ENCODE measurements at regions of chr2 and their contacts with region 1.

Region 1: DNA sequence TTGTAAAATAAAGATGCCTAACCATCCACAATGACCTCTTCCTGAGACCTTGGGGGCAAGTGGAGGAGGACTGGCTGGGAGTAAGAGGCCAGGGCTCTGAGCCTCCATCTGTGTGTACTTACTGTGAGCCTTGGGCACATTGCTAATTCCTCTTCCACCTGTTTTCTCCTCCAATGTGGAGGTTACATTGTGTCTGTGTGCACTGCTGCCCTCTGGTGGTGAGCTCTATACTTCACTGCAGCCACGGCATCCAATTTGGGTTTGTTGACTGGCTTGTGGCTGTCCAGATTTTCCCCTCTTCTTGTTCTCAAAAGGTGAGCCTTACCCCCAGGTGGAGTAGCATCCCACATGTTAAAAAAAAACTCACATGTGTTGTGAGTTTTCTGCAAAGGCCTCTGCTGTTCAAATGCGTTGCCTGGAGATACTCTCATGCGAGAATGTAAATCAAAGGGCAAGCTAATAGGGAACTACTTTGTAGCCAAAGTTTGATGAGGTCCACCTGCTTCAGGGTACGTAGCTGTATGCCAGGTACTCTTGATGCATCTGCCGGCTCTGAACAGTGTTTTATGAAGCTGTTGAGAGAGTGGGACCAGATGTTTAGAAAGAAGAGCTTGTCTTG is 80.8 kb downstream of the APOB start:
- DNase-seq: peak; percentile 41 to 94 (median 76)

Region 2: DNA sequence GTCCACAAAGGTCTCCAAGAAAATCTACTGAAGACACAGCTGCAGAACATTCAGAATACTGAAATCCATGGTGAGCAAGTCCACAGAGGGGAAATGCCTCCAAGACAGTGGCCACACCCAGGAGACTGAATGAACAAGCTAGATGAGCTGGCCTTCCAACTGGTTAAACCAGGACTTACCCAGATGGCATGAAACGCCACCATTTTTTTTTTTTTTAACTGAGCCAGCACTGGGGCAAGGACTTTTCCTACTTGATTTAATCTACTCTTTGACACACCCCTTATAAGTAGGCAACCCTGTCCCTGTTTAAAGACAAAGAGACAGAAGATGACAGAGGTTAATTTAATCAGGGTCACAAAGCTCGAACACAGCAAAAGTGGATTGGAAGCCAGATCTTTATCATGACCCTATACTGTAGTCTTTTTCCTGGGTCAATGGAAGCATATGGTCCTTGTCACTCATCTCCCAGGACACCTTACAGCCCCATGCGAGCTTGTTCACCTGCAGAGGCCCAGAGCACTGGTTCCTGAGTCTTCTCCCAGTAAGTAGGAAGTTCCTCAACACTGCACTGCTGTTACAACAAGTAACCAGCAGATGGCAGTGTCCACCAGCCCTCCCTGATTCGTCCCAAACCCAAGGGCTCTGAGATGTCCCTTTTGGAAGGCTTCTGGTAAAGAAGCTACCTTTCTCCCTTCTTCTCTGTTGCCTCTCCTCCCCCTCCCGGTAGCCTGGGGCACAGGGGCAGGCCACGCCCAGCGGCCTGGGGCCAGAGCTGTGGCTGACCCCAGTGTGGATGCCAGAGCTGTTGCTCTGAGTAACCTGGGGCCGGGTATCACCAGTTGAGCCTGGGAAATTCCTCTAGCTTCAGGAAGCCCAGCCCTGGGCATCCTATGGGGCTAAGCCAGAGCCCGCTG is 301.7 kb before region 1 on chr2:
- intact Hi-C with region 1: loop called (anchors 1 kb)
- DNase-seq: peak in 9 of 10 donors; percentile 56 to 95 (median 73)

Region 3: GRCh38 chr2:20682167-20682920 is 280.7 kb before region 1 on chr2:
- intact Hi-C with region 1: loop called (anchors 5 kb)
- DNase-seq: no peak

Region 4: GRCh38 chr2:20755132-20755800 is 207.8 kb before region 1 on chr2:
- intact Hi-C with region 1: no loop called
- DNase-seq: no peak

Region 5: DNA sequence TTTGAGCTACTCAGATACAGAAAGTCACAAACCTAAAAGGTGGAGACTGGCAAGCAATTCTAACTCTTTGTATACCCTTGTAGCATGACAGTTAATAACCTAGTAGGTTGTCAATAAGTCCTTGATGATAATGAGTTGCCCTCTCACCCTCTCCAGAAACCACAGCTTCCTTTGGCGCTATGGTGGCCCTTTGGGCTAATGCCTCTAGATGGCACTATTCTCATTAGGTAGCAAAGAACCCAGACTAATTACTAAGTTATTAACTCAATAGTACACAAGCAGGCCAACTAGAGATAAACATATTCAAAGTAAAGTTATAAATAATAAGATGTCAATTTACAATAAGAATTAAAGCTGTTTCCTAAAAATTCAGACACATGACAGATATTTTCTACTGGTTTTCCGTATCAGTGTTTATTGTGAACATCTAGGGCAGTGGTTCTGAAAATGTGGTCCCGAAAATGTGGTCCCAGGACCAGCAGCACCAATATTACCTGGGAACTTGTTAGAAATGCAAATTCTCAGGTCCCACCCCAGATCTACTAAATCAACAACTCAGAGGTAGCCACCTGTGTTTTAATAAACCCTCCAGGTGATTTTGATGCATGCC is 181.3 kb before region 1 on chr2:
- intact Hi-C with region 1: loop called (anchors 2 kb)
- DNase-seq: no peak

Region 6: DNA sequence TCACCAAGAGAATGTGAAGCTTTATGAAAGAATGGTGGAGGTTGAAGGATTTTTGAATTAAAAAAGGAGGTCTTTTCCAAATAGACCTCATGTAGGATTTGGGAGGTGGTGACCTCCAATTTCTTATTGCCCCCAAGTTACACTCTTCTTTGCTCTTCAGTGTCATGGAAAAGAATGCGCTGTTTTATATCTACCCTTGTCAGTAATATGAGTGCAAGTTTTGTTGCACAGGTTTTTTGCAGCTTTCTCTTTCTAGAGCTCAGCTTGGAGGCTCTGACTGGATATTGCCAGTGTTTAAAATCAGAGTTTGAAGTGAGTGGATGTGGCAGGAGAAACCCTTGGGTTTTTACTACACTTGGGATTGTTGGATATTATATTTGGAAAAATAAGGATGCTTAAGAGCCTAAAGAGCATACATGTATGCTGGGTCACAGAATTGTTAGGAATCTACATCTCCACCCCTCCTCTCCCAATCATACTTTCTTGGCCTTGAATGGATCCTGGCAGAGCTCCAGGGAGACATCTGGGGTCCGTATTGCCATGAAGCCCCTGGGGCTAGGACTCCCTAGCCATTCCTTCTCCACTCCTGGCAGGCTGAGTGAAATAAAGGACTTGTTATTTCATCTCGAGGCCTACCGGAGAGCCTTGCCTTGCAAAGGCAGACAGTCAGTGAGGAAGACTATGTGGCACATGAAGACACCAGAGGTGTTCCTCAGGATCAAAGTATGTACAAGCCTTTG is 37.0 kb after region 1 on chr2:
- intact Hi-C with region 1: no loop called
- DNase-seq: no peak